ENCODE measurements at regions of chr5 and their contacts with region 1.

Region 1: GRCh38 chr5:169980418-169981053 is at the start of gene INSYN2B:
- DNase-seq: peak in 1 of 9 donors; percentile 23
- ATAC-seq: peak; percentile 53
- H3K4me3 ChIP-seq: no peak within 1 kb of the TSS
- H3K4me3 Mint-ChIP-seq: no peak within 1 kb of the TSS
- H3K27ac ChIP-seq: no peak within 1 kb of the TSS
- H3K27ac Mint-ChIP-seq: peak within 1 kb of the TSS in 3 of 9 donors; percentile 9 to 28 (median 10)
- H3K4me1 ChIP-seq: no peaks in the 10 kb centered on the region
- H3K4me1 Mint-ChIP-seq: peaks cover 0 to 5% (median 0%) of the 10 kb centered on the region in 7 donors
- H3K27me3 ChIP-seq: no peaks in the 10 kb centered on the region
- H3K27me3 Mint-ChIP-seq: no peaks in the 10 kb centered on the region
- total RNA-seq, gene INSYN2B: not detected

Region 2: DNA sequence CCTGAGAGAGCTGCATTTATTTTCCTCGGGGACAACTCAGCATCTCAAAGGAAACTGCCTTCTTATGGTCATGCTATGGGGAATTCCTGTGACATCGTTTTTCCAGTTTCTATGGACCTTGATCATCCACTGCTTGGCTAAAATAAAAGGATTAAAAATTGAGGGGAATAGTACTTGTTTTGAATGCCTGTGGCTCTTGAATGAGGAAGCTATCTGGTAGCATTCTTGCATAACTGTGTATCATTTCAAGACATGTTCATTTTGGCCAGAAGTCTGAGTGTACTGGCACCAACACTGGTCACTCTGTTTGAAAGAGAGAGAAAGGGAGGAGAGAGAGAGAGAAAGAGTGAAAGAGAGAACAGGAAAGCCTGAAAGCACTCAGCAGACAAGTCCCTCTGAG is 226.7 kb before region 1 on chr5:
- CTCF ChIA-PET with region 1: no interaction called
- POLR2A ChIA-PET with region 1: no interaction called
- intact Hi-C with region 1: loop called in 1 of 2 experiments (anchors 10 kb)
- DNase-seq: no peak
- ATAC-seq: no peak
- H3K4me3 ChIP-seq: no peak overlapping the region
- H3K4me3 Mint-ChIP-seq: no peak overlapping the region
- H3K27ac ChIP-seq: no peak overlapping the region
- H3K27ac Mint-ChIP-seq: peak overlapping the region in 1 of 9 donors; percentile 46
- H3K4me1 ChIP-seq: no peaks in the 10 kb centered on the region
- H3K4me1 Mint-ChIP-seq: peaks cover 0 to 17% (median 0%) of the 10 kb centered on the region in 7 donors
- H3K27me3 ChIP-seq: no peaks in the 10 kb centered on the region
- H3K27me3 Mint-ChIP-seq: no peaks in the 10 kb centered on the region